ENCODE measurements at regions of chr2 and their contacts with region 1.

Region 1: GRCh38 chr2:206981739-206982340 is 42.5 kb downstream of the CPO start:
- DNase-seq: peak; percentile 73
- H3K4me3 Mint-ChIP-seq: no peak overlapping the region
- H3K27ac Mint-ChIP-seq: no peak overlapping the region
- H3K4me1 Mint-ChIP-seq: peaks cover 14% of the 10 kb centered on the region
- H3K27me3 Mint-ChIP-seq: no peaks in the 10 kb centered on the region

Region 2: GRCh38 chr2:206004004-206004693 is 977.7 kb before region 1 on chr2:
- CTCF ChIA-PET with region 1: no interaction called
- intact Hi-C with region 1: no loop called
- DNase-seq: peak; percentile 44
- H3K4me3 Mint-ChIP-seq: no peak overlapping the region
- H3K27ac Mint-ChIP-seq: no peak overlapping the region
- H3K4me1 Mint-ChIP-seq: peaks cover under 1% of the 10 kb centered on the region
- H3K27me3 Mint-ChIP-seq: no peaks in the 10 kb centered on the region

Region 3: DNA sequence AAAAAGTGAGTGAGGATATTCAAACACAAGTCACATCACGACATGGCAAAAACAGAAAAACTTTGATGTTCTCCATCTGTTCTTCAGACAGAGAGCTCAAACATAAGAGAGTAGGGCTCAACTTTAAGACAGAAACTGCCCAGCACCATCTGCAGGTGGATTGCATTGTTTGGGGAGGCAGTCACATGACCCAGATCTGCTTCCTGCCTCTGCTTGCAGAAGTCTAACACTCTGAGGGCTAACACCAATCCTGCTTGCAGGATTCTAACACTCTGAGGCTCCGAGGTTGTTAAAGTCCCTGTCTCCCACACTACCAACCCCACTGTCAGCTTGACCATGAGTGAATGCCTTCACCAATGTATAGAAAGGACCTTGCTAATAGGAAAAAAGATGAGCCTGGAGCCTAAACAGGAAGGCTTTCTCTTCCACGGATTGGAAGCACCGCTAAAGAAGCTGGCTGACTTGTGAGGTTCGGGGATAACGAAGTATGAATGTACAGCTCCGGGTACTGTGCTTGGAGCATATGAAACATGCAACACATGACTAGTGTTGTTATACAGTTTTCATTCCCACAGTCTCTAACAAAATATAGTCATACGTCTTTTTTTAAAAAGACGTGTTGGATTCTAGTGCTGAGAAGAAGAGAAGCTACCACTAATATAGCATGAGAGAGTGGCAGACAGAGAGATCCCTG is 371.3 kb after region 1 on chr2:
- CTCF ChIA-PET with region 1: no interaction called
- intact Hi-C with region 1: loop called (anchors 2 kb)
- DNase-seq: peak; percentile 65
- H3K4me3 Mint-ChIP-seq: no peak overlapping the region
- H3K27ac Mint-ChIP-seq: no peak overlapping the region
- H3K4me1 Mint-ChIP-seq: peaks cover 8% of the 10 kb centered on the region
- H3K27me3 Mint-ChIP-seq: no peaks in the 10 kb centered on the region